PC-9 (cell line): ENCODE measurements at regions of chr19 and their contacts with region 1.

Region 1: GRCh38 chr19:11913680-11914079 is 11.2 kb upstream of the ZNF700 start:
- DNase-seq: no peak
- H3K4me3 ChIP-seq: no peak overlapping the region
- H3K27ac ChIP-seq: no peak overlapping the region
- H3K4me1 ChIP-seq: no peaks in the 10 kb centered on the region
- H3K27me3 ChIP-seq: no peaks in the 10 kb centered on the region; the same call in 1 of the 2 replicates
- CTCF ChIP-seq: no peak

Region 2: GRCh38 chr19:11995174-11995573 is 81.5 kb after region 1 on chr19:
- CTCF ChIA-PET with region 1: interaction called, 13 read pairs
- POLR2A ChIA-PET with region 1: no interaction called
- intact Hi-C with region 1: no loop called
- DNase-seq: no peak
- H3K4me3 ChIP-seq: no peak overlapping the region
- H3K27ac ChIP-seq: no peak overlapping the region
- H3K4me1 ChIP-seq: no peaks in the 10 kb centered on the region
- H3K27me3 ChIP-seq: no peaks in the 10 kb centered on the region
- CTCF ChIP-seq: no peak